Activated T-helper 1 cell treated with anti-CD3 and anti-CD28 coated beads, Interleukin-12 subunit alpha, Interleukin-12 subunit beta, Interleukin-2, Interleukin-4 antibody, amounts not matched to agents 30 ng/mL and 10 ng/mL and 1 ng/mL, durations not matched to agents 14 hours and 24 hours and 36 hours (primary cell): ENCODE measurements at regions of chr4 and their contacts with region 1.

Region 1: DNA sequence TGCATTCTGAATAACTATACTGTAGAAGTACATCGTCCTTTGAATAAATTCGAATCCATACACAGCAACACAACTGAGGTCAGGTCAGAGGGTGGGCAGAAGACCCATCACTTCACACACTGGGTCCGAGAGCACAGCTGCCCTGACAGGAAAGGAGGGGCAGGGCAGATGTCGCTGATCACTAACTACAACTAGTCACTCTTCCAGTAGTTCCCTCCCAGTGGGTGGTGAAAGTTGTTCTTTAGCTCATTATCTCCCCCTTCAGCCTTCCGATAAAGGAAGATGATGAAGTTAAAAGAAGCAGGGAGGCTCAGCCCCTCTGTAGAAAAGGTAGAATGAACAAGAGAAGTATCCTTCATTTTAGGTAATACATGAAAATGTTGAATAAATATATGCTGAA is 278.9 kb downstream of the INPP4B start:
- DNase-seq: peak; percentile 51
- H3K4me3 Mint-ChIP-seq: peak overlapping the region; percentile 93
- H3K27ac Mint-ChIP-seq: peak overlapping the region; percentile 97
- H3K4me1 Mint-ChIP-seq: peaks cover 76% of the 10 kb centered on the region
- H3K27me3 Mint-ChIP-seq: no peaks in the 10 kb centered on the region

Region 2: DNA sequence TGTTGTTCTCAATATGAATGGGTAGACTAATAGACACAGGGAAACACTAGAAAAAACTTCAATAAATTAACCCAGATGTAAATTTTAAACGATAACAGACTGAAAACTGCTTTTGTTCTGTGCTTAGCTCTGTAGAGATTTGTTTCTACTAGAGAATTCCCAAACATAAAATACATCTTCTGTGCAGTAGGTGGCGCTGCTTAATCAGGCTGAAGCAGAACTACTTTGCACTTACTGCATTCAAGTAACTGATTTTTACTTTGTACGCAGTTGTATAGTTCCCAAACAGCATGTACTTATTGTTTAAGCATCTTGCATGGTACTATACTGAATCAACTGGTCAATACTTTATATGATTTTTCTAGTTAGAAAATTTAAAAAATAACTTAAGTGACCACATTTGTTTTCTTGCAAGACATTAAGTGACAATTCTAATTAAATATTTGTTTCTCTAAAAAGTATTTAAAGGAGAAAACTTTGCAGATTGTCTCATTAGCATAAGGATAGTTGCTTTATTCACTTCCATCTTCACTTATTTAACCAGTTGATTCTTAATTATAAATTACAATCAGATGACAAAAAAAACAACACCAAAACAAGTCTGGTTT is 440.2 kb before region 1 on chr4:
- intact Hi-C with region 1: loop called (anchors 5 kb)
- DNase-seq: peak; percentile 27
- H3K4me3 Mint-ChIP-seq: no peak overlapping the region
- H3K27ac Mint-ChIP-seq: no peak overlapping the region
- H3K4me1 Mint-ChIP-seq: peaks cover 18% of the 10 kb centered on the region
- H3K27me3 Mint-ChIP-seq: no peaks in the 10 kb centered on the region

Region 3: GRCh38 chr4:142347241-142347640 is 220.0 kb before region 1 on chr4:
- intact Hi-C with region 1: no loop called
- DNase-seq: no peak
- H3K4me3 Mint-ChIP-seq: no peak overlapping the region
- H3K27ac Mint-ChIP-seq: no peak overlapping the region
- H3K4me1 Mint-ChIP-seq: peaks cover 56% of the 10 kb centered on the region
- H3K27me3 Mint-ChIP-seq: no peaks in the 10 kb centered on the region

Region 4: GRCh38 chr4:142379277-142380057 is 187.7 kb before region 1 on chr4:
- intact Hi-C with region 1: loop called (anchors 1 kb)
- DNase-seq: no peak
- H3K4me3 Mint-ChIP-seq: no peak overlapping the region
- H3K27ac Mint-ChIP-seq: no peak overlapping the region
- H3K4me1 Mint-ChIP-seq: peaks cover 61% of the 10 kb centered on the region
- H3K27me3 Mint-ChIP-seq: no peaks in the 10 kb centered on the region

Region 5: GRCh38 chr4:142443469-142443868 is 123.7 kb before region 1 on chr4:
- intact Hi-C with region 1: no loop called
- DNase-seq: no peak
- H3K4me3 Mint-ChIP-seq: no peak overlapping the region
- H3K27ac Mint-ChIP-seq: no peak overlapping the region
- H3K4me1 Mint-ChIP-seq: peaks cover 10% of the 10 kb centered on the region
- H3K27me3 Mint-ChIP-seq: no peaks in the 10 kb centered on the region

Region 6: GRCh38 chr4:142556048-142556447 is 11.2 kb before region 1 on chr4:
- intact Hi-C with region 1: loop called (anchors 1 kb)
- DNase-seq: no peak
- H3K4me3 Mint-ChIP-seq: peak overlapping the region; percentile 58
- H3K27ac Mint-ChIP-seq: peak overlapping the region; percentile 70
- H3K4me1 Mint-ChIP-seq: peaks cover 44% of the 10 kb centered on the region
- H3K27me3 Mint-ChIP-seq: no peaks in the 10 kb centered on the region

Region 7: GRCh38 chr4:142824368-142824767 is 257.2 kb after region 1 on chr4:
- intact Hi-C with region 1: loop called (anchors 5 kb)
- DNase-seq: no peak
- H3K4me3 Mint-ChIP-seq: no peak overlapping the region
- H3K27ac Mint-ChIP-seq: no peak overlapping the region
- H3K4me1 Mint-ChIP-seq: peaks cover 5% of the 10 kb centered on the region
- H3K27me3 Mint-ChIP-seq: peaks cover 2% of the 10 kb centered on the region

Region 8: GRCh38 chr4:143513306-143514168 is 946.3 kb after region 1 on chr4 and contains the start of gene SMARCA5:
- intact Hi-C with region 1: loop called (anchors 5 kb)
- DNase-seq: peak; percentile 95
- H3K4me3 Mint-ChIP-seq: peak within 1 kb of the TSS; percentile 94
- H3K27ac Mint-ChIP-seq: peak within 1 kb of the TSS; percentile 93
- H3K4me1 Mint-ChIP-seq: peaks cover 29% of the 10 kb centered on the region
- H3K27me3 Mint-ChIP-seq: peaks cover 10% of the 10 kb centered on the region
- total RNA-seq, gene SMARCA5: 59.9 and 60.7 TPM in 2 replicates